ENCODE measurements at regions of chr17 and their contacts with region 1.

Region 1: DNA sequence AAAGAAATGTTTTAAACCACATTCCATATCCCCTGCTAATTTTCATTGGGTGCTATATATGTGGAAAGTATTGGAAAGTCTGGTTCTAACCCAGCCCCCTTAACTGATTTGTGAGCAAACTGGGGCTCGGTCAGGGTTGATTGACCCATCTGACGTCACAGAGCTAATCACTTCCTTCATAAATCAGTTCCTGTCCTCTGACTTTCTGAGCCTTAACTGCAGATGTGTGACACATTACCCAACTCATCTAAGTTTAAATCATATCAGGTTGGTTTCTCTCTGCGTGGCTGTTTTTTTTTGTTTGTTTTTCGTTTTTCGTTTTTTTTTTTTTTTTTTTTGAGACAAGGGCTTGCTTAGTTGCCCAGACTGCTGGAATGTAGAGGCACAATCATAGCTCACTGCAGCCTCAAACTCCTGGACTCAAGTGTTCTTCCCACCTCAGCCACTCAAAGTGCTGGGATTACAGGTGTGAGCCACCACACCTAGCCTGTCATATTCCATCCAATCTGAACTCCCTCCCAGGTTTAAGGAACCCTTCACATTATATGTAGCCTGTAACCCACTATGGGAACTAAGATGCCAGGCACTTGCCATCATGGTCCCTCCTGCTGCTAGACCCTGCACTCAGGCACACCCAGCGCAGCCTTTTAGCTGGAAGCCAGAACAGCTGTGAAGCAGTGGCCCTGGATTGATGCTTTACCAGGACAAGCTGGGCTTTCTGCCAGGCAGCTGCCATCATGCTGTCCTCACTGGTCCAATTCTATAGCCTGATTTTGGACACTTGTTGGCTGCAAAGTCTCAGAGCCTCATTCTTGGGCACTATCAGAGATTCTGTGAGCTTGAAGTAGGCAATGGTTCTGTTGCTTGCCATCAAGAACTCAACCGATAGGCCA is 6.9 kb upstream of the BPTF start:
- DNase-seq: no peak
- ATAC-seq: peak; percentile 63
- H3K4me3 Mint-ChIP-seq: peak overlapping the region; percentile 76
- H3K27ac Mint-ChIP-seq: peak overlapping the region; percentile 90
- H3K4me1 Mint-ChIP-seq: peaks cover 81% of the 10 kb centered on the region
- H3K27me3 Mint-ChIP-seq: no peaks in the 10 kb centered on the region
- CTCF ChIP-seq: no peak

Region 2: DNA sequence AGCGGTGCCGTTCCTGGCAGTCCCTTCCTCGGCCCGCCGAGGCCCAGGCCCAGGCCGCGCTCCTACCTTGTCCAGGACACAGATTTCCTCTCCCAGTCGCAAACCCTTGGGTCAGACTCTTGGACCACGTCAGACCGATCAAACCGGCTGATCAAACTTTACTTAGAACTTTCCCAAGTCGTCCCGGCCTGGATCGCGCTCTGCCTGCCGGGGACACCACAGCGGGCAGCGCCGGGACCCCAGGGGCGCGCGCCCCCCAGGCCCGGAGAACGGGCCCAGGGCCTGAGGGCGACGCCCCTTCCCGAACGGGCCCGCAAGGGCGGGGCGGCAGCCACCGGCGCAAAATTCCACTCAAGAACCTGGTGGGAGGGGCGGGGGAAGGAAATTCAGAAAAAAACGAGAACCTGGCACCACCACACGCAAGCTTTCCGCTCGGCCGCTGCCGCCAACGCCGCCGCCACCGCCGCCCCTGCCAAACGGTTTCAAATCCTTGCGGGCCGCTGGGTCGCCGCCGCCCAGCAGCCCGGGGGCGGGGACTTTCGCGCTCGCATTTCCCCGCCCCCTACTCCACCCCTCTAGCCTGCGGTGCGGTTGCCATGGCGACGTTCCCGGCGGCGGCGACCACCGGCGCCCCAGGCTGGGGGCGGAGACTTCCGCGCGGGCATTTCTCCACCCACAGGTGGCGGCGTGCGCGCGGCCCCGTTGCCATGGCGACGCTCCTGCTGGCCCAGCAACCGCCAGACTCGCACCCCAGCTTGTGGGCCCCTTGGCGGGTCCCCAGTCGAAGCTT is 1626.6 kb before region 1 on chr17 and contains the start of gene CEP112:
- CTCF ChIA-PET with region 1: no interaction called
- POLR2A ChIA-PET with region 1: no interaction called
- intact Hi-C with region 1: loop called (anchors 5 kb)
- DNase-seq: peak; percentile 82
- ATAC-seq: peak; percentile 76
- H3K4me3 Mint-ChIP-seq: peak within 1 kb of the TSS; percentile 85
- H3K27ac Mint-ChIP-seq: peak within 1 kb of the TSS; percentile 80
- H3K4me1 Mint-ChIP-seq: peaks cover 34% of the 10 kb centered on the region
- H3K27me3 Mint-ChIP-seq: peaks cover 4% of the 10 kb centered on the region
- CTCF ChIP-seq: no peak
- total RNA-seq, gene CEP112: 3.8 and 3.9 TPM in 2 replicates

Region 3: DNA sequence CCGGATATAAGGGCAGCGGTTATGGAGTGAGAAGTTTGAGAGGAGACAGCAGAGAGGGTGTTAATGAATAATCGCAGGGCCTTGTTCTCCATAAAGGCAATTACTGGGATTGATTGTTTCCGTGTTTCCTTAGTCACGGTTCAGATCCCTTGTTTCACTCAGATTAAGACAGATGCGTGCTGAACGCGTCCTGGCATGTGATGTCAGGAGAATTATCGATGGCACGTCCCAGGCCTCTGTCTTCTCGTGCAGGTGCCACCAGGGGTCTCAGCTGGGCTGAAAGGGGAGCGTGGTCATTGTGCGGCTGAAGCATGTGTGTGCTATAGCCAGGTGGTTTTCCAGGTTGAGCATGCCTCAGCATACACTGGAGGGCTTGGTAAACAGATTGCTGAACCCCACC is 243.0 kb before region 1 on chr17:
- CTCF ChIA-PET with region 1: no interaction called
- POLR2A ChIA-PET with region 1: no interaction called
- intact Hi-C with region 1: loop called (anchors 10 kb)
- DNase-seq: no peak
- ATAC-seq: peak; percentile 23
- H3K4me3 Mint-ChIP-seq: peak overlapping the region; percentile 64
- H3K27ac Mint-ChIP-seq: peak overlapping the region; percentile 80
- H3K4me1 Mint-ChIP-seq: peaks cover 73% of the 10 kb centered on the region
- H3K27me3 Mint-ChIP-seq: no peaks in the 10 kb centered on the region
- CTCF ChIP-seq: no peak

Region 4: GRCh38 chr17:67615011-67615561 is 203.3 kb before region 1 on chr17:
- CTCF ChIA-PET with region 1: no interaction called
- POLR2A ChIA-PET with region 1: no interaction called
- intact Hi-C with region 1: no loop called
- DNase-seq: no peak
- ATAC-seq: no peak
- H3K4me3 Mint-ChIP-seq: no peak overlapping the region
- H3K27ac Mint-ChIP-seq: no peak overlapping the region
- H3K4me1 Mint-ChIP-seq: no peaks in the 10 kb centered on the region
- H3K27me3 Mint-ChIP-seq: no peaks in the 10 kb centered on the region
- CTCF ChIP-seq: no peak

Region 5: GRCh38 chr17:67700037-67700724 is 118.2 kb before region 1 on chr17:
- CTCF ChIA-PET with region 1: no interaction called
- POLR2A ChIA-PET with region 1: no interaction called
- intact Hi-C with region 1: no loop called
- DNase-seq: no peak
- ATAC-seq: no peak
- H3K4me3 Mint-ChIP-seq: no peak overlapping the region
- H3K27ac Mint-ChIP-seq: no peak overlapping the region
- H3K4me1 Mint-ChIP-seq: no peaks in the 10 kb centered on the region
- H3K27me3 Mint-ChIP-seq: peaks cover 2% of the 10 kb centered on the region
- CTCF ChIP-seq: no peak

Region 6: GRCh38 chr17:67785504-67785903 is 32.9 kb before region 1 on chr17:
- CTCF ChIA-PET with region 1: no interaction called
- POLR2A ChIA-PET with region 1: interaction called, 13 read pairs
- intact Hi-C with region 1: no loop called
- DNase-seq: no peak
- ATAC-seq: no peak
- H3K4me3 Mint-ChIP-seq: no peak overlapping the region
- H3K27ac Mint-ChIP-seq: no peak overlapping the region
- H3K4me1 Mint-ChIP-seq: peaks cover 3% of the 10 kb centered on the region
- H3K27me3 Mint-ChIP-seq: no peaks in the 10 kb centered on the region
- CTCF ChIP-seq: no peak

Region 7: DNA sequence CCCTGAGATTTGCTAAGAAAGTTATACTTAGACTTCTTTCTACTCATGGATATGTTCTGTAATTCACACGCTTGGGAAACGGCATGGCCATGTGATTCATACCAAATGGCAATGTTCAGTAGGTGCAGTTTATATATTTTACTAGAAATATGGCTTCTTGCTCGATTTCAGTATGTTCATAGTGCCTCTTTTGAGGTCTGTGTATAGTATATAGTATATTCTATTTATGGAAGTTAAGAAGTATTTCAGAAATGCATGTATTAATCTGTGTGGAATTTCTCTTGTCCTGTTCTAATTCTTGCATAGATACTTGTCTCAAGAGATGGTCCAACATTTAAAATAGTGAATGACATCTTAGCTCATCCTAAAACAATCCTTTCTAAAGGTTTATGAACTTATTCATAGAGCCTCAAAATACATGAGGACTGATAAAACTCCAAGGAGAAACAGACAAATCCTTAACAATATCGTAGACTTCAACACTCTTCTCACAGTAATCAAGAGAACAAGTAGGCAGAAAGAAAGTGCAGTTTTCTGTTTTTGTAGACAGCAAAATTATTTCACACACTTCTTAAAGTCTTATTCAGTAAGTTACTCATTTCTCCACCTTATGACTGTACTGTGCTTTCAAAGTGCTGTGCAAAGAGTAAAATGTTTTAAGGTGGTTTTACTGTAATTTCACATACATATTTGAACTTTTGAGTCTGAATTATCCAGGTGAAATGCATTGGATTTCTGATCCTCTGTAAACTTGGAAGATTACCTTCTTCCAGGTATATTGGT is 18.0 kb after region 1 on chr17:
- CTCF ChIA-PET with region 1: no interaction called
- POLR2A ChIA-PET with region 1: no interaction called
- intact Hi-C with region 1: no loop called
- DNase-seq: no peak
- ATAC-seq: no peak
- H3K4me3 Mint-ChIP-seq: no peak overlapping the region
- H3K27ac Mint-ChIP-seq: peak overlapping the region; percentile 71
- H3K4me1 Mint-ChIP-seq: peaks cover 76% of the 10 kb centered on the region
- H3K27me3 Mint-ChIP-seq: no peaks in the 10 kb centered on the region
- CTCF ChIP-seq: no peak

Region 8: DNA sequence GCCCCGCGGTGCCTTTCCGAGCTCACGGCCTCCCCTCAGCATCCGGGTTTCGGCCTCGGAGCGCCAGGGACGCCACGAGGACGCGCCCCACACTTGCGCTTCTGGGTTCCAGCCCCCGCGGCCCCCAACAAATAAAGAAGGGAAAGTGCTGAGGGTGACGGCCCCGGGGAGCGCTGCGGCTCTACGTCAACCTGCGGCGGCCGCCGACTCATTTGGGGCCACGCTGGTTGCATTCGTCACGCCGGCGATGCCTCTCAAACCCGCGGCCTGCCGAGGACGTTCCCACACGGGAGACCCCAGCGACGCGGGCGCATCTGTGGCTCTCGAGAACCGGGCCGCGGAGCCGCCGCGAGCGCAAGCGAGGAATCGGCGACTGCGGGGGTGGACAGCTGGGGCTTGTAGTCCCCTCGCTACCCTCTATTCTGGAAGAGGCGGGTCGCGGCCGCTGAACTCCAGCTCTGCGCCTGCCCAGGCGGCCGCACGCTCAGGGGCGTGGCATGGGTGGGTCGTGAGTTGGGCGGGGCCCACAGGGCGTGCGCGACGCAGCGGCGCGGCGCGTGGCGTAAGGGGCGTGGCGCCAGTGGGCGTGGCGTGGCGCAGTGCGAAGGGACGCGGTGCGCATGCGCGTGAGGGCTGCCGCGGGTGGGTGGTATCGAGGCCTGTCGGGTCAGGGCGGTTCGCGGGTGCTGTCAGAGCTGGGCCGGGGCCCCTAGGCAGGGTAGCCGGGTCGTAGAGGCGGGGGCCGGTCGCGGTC is 429.3 kb after region 1 on chr17 and contains the start of gene AMZ2:
- CTCF ChIA-PET with region 1: no interaction called
- POLR2A ChIA-PET with region 1: no interaction called
- intact Hi-C with region 1: loop called (anchors 5 kb)
- DNase-seq: peak; percentile 100
- ATAC-seq: peak; percentile 87
- H3K4me3 Mint-ChIP-seq: peak within 1 kb of the TSS; percentile 92
- H3K27ac Mint-ChIP-seq: peak within 1 kb of the TSS; percentile 95
- H3K4me1 Mint-ChIP-seq: peaks cover 53% of the 10 kb centered on the region
- H3K27me3 Mint-ChIP-seq: no peaks in the 10 kb centered on the region
- CTCF ChIP-seq: no peak
- total RNA-seq, gene AMZ2: 42.1 and 55.4 TPM in 2 replicates